ENCODE measurements at regions of chr12 and their contacts with region 1.

Region 1: GRCh38 chr12:63849641-63850040 is 5.1 kb downstream of the SRGAP1 start:
- DNase-seq: no peak
- H3K4me3 ChIP-seq: no peak overlapping the region
- H3K27ac ChIP-seq: no peak overlapping the region
- H3K4me1 ChIP-seq: peaks cover 19% of the 10 kb centered on the region
- H3K27me3 ChIP-seq: no peaks in the 10 kb centered on the region
- CTCF ChIP-seq: no peak

Region 2: GRCh38 chr12:63911341-63911740 is 61.7 kb after region 1 on chr12:
- CTCF ChIA-PET with region 1: no interaction called
- dilution Hi-C with region 1: loop called (anchors 5 kb)
- in situ Hi-C with region 1: no loop called
- intact Hi-C with region 1: no loop called
- DNase-seq: no peak
- H3K4me3 ChIP-seq: no peak overlapping the region
- H3K27ac ChIP-seq: no peak overlapping the region
- H3K4me1 ChIP-seq: peaks cover 18% of the 10 kb centered on the region
- H3K27me3 ChIP-seq: no peaks in the 10 kb centered on the region
- CTCF ChIP-seq: no peak